Right ventricle myocardium superior (tissue), 1 donor: ENCODE measurements at regions of chr6 and their contacts with region 1.

Region 1: GRCh38 chr6:29955783-29956182 is 13.5 kb downstream of the HLA-A start:
- DNase-seq: no peak
- ATAC-seq: peak; percentile 64

Region 2: GRCh38 chr6:29797135-29797534 is 158.6 kb before region 1 on chr6:
- intact Hi-C with region 1: loop called (anchors 5 kb)
- DNase-seq: no peak
- ATAC-seq: no peak